Activated CD4-positive, alpha-beta memory T cell treated with anti-CD3 and anti-CD28 coated beads for 36 hours (primary cell): ENCODE measurements at regions of chr1 and their contacts with region 1.

Region 1: GRCh38 chr1:72777918-72778317 is 495.6 kb upstream of the NEGR1 start:
- DNase-seq: no peak
- H3K4me3 Mint-ChIP-seq: no peak overlapping the region
- H3K27ac Mint-ChIP-seq: no peak overlapping the region
- H3K4me1 Mint-ChIP-seq: no peaks in the 10 kb centered on the region
- H3K27me3 Mint-ChIP-seq: no peaks in the 10 kb centered on the region

Region 2: DNA sequence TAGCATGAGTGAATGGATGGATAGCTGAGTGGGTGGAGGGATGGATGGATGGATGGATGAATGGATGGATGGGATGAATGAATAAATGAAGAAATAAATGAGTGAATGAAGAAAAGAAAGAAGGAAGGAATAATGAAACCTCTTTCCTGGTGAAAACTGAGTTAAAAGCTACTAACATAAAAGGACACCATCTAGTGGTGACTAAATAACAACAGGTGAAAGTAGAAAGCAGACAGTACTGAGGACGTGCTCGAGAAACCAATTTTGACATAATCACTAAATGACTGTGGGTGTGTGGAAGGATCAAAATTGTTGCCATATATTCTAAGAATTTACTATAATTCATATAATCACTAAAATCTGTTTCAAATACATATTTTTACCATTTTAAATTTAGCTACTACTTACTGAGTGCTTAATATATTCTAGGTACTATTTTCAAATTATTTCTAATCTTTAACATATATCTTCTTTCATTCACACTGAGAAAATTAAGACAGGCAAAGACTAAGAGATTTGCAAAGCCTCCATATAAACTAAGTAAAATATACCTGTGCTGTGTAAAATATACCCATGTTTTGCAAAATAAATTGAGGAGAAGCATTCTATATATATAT is 897.1 kb after region 1 on chr1:
- CTCF ChIA-PET with region 1: no interaction called
- POLR2A ChIA-PET with region 1: no interaction called
- intact Hi-C with region 1: loop called (anchors 5 kb)
- DNase-seq: no peak
- H3K4me3 Mint-ChIP-seq: no peak overlapping the region
- H3K27ac Mint-ChIP-seq: no peak overlapping the region
- H3K4me1 Mint-ChIP-seq: no peaks in the 10 kb centered on the region
- H3K27me3 Mint-ChIP-seq: no peaks in the 10 kb centered on the region